ENCODE measurements at regions of chr5 and their contacts with region 1.

Region 1: DNA sequence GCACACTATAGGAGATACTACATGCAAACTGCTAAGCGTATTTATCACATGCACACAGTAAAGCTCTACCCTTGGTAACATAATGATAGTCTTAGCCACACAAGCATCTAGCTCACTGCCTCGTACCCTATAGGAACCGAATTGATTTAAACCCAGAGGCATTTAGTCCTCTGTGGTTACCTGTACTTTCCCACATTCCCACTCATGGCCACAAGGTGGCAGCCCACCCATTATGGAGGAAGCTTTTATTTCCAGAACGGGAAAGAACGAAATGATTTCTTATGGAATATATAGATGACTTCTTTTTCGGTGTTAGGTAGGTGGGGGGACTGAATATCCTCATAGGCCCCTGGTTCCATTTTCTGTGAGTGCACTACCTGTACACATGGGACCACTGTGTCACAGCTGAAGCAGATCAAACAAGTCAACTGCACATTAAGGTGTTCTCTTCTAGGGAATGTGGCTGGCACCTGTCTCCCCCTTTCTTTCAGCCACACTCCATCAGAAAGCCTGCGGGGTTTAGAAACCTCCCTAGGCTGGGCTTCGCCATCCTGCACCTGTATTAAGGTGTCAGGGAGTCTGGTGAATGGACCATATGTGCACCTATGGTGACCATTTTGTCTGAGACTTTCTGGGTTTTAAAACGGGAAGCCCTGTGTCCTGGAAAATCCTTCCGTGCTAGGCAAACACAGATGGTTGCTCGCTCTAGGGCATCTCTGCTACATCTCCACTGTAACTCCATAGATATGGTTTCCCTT is 313.2 kb downstream of the SLIT3 start:
- DNase-seq: peak; percentile 86

Region 2: DNA sequence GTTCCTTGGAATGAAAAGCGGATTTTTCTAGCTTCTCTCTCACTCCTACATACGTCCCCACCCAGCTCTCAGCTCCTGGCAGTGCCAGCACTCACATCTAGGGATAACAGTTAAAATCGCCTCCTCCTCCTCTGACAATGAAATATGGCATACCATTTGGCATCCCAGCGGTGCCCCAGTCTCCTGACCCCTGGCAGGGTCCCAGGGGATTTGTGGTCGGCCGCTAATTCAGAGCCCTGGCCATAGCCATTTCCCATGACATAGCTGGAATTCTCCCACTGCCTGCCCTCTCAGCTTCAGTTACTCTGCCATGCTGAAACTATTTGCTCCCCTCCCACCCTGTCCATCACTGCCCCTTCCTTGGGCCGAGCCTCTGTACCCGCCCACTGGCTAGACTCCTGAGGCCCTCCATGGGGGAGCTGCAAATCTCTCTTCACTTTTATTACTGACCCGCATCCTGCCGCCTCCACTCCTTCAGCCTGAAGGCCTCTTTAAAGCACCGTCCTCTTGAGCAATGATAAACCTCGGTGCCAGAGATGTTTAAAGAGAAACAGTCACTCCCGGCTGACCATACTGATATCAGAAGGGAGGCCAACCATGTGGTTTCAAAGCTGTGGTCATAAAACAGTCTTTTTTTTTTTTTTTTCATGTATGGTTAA is 173.4 kb after region 1 on chr5:
- intact Hi-C with region 1: loop called in 1 of 2 experiments (anchors 10 kb)
- DNase-seq: peak; percentile 88

Region 3: GRCh38 chr5:169302491-169303118 is 314.9 kb after region 1 on chr5:
- intact Hi-C with region 1: loop called (anchors 5 kb)
- DNase-seq: peak; percentile 91

Region 4: DNA sequence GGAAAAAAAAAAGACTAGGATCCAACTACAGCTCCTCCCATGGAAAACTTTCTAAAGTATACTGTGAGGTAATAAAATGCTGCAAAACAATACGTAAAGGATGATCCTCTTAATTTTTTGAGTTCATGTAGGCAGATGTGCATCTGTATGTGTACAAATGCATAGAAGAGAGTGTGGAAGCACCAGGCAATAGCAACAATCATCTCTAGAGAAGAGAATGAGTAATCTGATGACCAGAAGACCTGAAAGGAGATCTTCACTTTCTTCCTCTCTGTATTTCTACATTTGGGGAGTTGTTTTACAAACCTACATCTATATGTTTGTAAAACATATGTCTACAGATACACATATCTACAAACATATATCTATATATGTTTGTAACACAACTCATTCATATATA is 566.5 kb after region 1 on chr5:
- intact Hi-C with region 1: loop called in 1 of 2 experiments (anchors 10 kb)
- DNase-seq: no peak

Region 5: DNA sequence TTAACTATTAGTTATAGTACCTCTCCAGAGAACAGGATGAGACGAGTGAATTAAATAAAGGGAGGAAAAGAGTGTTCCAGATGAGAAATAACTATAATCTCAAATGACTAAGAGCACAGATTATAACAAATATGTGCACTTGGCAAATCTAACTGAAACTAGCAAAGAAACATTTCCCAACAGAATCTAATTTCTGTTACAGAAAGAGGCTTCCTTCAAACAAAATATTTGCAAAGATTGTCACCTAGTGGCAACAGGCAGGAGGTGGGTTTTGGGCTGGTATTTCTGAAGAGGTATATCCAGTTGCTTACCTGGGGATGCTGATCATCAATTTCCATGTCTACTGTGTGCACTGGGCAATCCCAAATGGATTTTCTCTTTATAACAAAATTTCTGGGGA is 590.2 kb after region 1 on chr5:
- intact Hi-C with region 1: loop called in 1 of 2 experiments (anchors 5 kb)
- DNase-seq: no peak